BJ (cell line): ENCODE measurements at regions of chr1 and their contacts with region 1.

Region 1: DNA sequence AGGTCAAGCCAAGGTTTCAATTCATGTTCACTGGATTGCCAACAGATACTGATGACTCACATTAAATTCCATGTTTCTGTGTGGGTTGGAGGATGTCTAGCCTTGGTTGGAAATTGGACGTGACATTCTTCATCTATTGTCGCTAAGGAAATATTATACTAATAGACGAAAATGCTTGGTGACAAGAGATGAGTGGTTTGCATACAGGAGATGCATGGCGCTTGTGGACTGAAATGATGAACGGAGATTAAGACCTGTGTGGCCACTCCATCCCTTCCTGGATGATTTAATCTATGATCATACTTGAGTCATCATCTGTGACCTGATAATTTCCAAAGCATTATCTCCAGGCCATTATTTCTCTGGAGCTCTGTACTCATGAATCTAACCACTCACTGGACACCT is 97.0 kb upstream of the CD34 start:
- DNase-seq: no peak
- H3K4me3 ChIP-seq: no peak overlapping the region
- H3K27me3 ChIP-seq: no peaks in the 10 kb centered on the region
- CTCF ChIP-seq: no peak

Region 2: DNA sequence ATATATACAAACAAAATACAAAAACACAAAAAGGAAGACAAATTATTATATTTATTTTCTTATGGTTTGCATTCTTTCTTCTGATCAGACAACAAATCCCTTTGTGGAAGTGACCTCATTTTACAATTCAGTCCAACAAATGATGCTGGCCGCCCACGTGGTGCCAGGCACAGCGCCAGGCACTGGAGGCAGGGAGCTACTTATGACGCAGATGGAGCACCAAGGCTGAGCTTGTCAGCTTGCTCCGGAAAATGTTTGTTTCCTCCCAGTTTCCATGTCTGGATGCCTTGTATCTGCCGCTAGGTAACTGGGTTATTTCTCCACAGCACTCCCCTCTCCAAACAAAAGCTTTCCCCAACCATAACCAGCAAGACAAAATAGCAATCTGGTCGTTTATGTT is 66.3 kb before region 1 on chr1:
- CTCF ChIA-PET with region 1: no interaction called
- POLR2A ChIA-PET with region 1: no interaction called
- DNase-seq: no peak
- H3K4me3 ChIP-seq: no peak overlapping the region
- H3K27me3 ChIP-seq: no peaks in the 10 kb centered on the region
- CTCF ChIP-seq: no peak

Region 3: GRCh38 chr1:207997486-207998268 is 10.3 kb before region 1 on chr1:
- CTCF ChIA-PET with region 1: interaction called, 29 read pairs
- POLR2A ChIA-PET with region 1: no interaction called
- DNase-seq: no peak
- H3K4me3 ChIP-seq: no peak overlapping the region
- H3K27me3 ChIP-seq: peaks cover 7% of the 10 kb centered on the region
- CTCF ChIP-seq: peak; percentile 91

Region 4: DNA sequence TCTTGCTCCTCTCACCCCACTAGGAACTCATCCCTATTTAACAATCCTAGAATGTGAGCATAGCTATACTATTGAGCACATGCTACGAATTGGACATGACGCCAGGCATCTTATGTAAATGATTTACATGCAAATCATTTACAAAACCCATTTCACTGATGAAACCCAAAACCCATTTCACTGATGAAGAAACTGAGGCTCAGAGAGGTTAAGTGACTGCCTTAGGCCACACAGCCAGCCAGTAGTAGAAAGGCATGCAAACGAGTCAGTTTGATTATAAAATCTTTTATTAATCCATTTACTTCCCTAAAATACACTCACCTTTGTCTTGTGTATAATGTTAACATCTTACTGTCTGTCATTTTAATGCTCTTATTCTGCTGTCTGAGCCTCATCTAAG is 148.4 kb after region 1 on chr1:
- CTCF ChIA-PET with region 1: no interaction called
- POLR2A ChIA-PET with region 1: no interaction called
- DNase-seq: no peak
- H3K4me3 ChIP-seq: no peak overlapping the region
- H3K27me3 ChIP-seq: no peaks in the 10 kb centered on the region
- CTCF ChIP-seq: no peak

Region 5: GRCh38 chr1:208868554-208868953 is 860.6 kb after region 1 on chr1:
- CTCF ChIA-PET with region 1: no interaction called
- POLR2A ChIA-PET with region 1: interaction called, 11 read pairs
- DNase-seq: no peak
- H3K4me3 ChIP-seq: no peak overlapping the region
- H3K27me3 ChIP-seq: no peaks in the 10 kb centered on the region
- CTCF ChIP-seq: no peak